ENCODE measurements at regions of chr2 and their contacts with region 1.

Region 1: GRCh38 chr2:62195421-62196277 is at the start of gene B3GNT2:
- DNase-seq: peak; percentile 72 to 94 (median 82)
- ATAC-seq: peak; percentile 76
- H3K4me3 ChIP-seq: peak within 1 kb of the TSS; percentile 98
- H3K4me3 Mint-ChIP-seq: peak within 1 kb of the TSS; percentile 95
- H3K27ac ChIP-seq: peak within 1 kb of the TSS; percentile 75 to 88
- H3K27ac Mint-ChIP-seq: peak within 1 kb of the TSS; percentile 78
- H3K4me1 ChIP-seq: peaks cover 32% of the 10 kb centered on the region
- H3K4me1 Mint-ChIP-seq: peaks cover 28% of the 10 kb centered on the region
- H3K27me3 ChIP-seq: no peaks in the 10 kb centered on the region
- H3K27me3 Mint-ChIP-seq: no peaks in the 10 kb centered on the region
- CTCF ChIP-seq: no peak
- total RNA-seq, gene B3GNT2: 47.7 TPM

Region 2: DNA sequence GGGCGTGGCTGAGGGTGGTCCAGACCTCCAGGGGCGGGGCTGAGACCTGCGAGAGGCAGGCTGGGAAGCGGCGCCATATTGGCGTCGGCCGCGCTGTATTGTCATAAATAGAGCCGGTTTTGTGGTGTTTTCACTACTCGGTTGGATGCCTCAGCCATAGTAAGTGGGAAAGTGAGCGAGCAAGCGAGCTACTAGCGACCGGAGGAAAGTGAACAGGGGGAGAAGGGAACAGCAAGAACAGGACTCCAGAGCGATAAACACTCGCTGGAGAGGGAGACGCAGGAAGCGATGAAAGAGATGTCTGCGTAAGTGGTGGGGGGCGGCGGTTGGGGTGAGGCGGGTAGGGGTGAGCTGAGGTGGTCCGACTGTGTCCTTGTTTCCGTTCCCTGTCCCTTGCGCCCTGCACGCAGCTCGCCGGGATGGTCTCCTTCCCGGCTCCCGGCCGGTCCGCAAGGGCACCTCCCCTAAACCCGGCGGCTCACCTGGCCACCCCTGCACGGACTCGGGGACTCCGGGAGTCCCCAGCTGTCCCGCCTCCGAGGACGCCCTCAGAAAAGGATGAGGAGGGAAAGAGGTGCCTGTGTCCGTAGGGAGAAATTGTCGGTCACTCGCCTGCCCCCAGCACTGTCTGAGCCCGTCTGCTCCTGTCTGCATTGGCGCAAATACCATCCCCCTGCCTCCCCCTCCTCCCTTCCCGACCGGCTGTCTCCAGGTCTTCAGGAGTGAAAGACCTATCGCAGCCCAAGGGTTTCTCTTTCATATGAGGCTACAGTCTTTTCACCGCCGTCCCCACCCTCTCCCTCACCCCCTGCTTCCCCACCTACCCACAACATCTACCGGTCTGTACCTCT is 1439.2 kb before region 1 on chr2 and contains the start of gene PAPOLG:
- CTCF ChIA-PET with region 1: no interaction called
- POLR2A ChIA-PET with region 1: no interaction called
- intact Hi-C with region 1: loop called in 1 of 2 experiments (anchors 10 kb)
- DNase-seq: peak; percentile 93 to 99 (median 96)
- ATAC-seq: peak; percentile 98
- H3K4me3 ChIP-seq: peak within 1 kb of the TSS; percentile 84
- H3K4me3 Mint-ChIP-seq: peak within 1 kb of the TSS; percentile 98
- H3K27ac ChIP-seq: peak within 1 kb of the TSS; percentile 80 to 91
- H3K27ac Mint-ChIP-seq: peak within 1 kb of the TSS; percentile 86
- H3K4me1 ChIP-seq: peaks cover 24% of the 10 kb centered on the region
- H3K4me1 Mint-ChIP-seq: peaks cover 50% of the 10 kb centered on the region
- H3K27me3 ChIP-seq: no peaks in the 10 kb centered on the region
- H3K27me3 Mint-ChIP-seq: no peaks in the 10 kb centered on the region
- CTCF ChIP-seq: no peak
- total RNA-seq, gene PAPOLG: 18.2 to 19.9 TPM

Region 3: DNA sequence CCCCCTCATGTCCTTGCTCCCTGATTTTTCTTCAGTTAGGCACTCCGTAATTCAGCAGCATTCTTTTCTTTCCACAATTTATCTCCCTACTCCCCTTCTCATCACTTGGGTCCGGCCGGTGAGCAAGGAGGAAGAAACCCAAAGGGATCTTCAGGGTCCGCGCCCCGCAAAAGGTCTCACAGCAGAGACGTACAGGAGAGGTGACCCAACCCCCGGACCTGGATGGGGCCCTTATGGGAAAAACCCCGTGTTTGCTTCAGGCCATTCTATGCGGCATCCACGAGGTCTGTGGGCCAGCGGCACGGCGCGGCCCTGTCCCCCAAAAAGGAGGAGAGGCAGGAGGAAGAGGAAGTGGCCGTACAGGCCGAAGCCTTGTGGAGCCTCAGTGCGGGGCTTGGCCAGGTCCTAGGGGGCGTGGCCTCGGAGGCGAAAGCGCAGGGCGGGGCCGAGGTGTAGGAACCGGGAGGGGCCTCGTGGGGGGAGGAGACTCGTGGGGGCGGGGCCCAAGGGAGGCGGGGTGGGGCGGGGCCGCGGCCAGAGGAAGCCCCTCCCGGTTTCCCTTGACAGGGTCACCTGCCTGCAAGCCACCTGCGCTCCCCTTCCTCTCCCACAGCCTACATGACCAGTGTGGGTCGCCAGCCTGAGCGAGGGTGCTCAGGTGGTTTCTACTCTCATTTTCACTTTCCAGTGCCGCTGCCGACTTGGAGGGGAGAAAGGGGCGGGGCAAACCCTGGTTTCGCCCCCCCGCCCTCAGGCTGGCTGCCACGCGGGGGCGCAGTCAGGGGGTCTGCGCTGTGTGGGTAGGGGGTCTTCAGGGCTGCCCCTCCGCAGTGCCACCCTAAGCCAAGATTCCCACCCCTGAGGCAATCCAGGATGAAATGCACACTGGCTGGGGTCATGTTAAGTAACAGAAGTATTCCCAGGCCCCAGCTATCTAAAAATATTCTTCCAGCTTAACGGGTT is 501.1 kb before region 1 on chr2:
- CTCF ChIA-PET with region 1: no interaction called
- POLR2A ChIA-PET with region 1: no interaction called
- intact Hi-C with region 1: loop called in 1 of 2 experiments (anchors 5 kb)
- DNase-seq: peak; percentile 65 to 90 (median 80)
- ATAC-seq: peak; percentile 95
- H3K4me3 ChIP-seq: peak overlapping the region; percentile 83
- H3K4me3 Mint-ChIP-seq: peak overlapping the region; percentile 89
- H3K27ac ChIP-seq: peak overlapping the region; percentile 29 to 59
- H3K27ac Mint-ChIP-seq: peak overlapping the region; percentile 85
- H3K4me1 ChIP-seq: peaks cover 11% of the 10 kb centered on the region
- H3K4me1 Mint-ChIP-seq: peaks cover 9% of the 10 kb centered on the region
- H3K27me3 ChIP-seq: no peaks in the 10 kb centered on the region
- H3K27me3 Mint-ChIP-seq: no peaks in the 10 kb centered on the region
- CTCF ChIP-seq: peak; percentile 31

Region 4: GRCh38 chr2:61888267-61889055 is 307.2 kb before region 1 on chr2 and contains the start of gene CCT4:
- CTCF ChIA-PET with region 1: no interaction called
- POLR2A ChIA-PET with region 1: no interaction called
- intact Hi-C with region 1: loop called in 1 of 2 experiments (anchors 5 kb)
- DNase-seq: peak; percentile 83 to 96 (median 88)
- ATAC-seq: peak; percentile 79
- H3K4me3 ChIP-seq: peak within 1 kb of the TSS; percentile 79
- H3K4me3 Mint-ChIP-seq: peak within 1 kb of the TSS; percentile 100
- H3K27ac ChIP-seq: peak within 1 kb of the TSS; percentile 90 to 98
- H3K27ac Mint-ChIP-seq: peak within 1 kb of the TSS; percentile 100
- H3K4me1 ChIP-seq: peaks cover 19% of the 10 kb centered on the region
- H3K4me1 Mint-ChIP-seq: peaks cover 38% of the 10 kb centered on the region
- H3K27me3 ChIP-seq: no peaks in the 10 kb centered on the region
- H3K27me3 Mint-ChIP-seq: no peaks in the 10 kb centered on the region
- CTCF ChIP-seq: no peak
- total RNA-seq, gene CCT4: 100 to 114 TPM

Region 5: GRCh38 chr2:62221141-62221540 is 25.5 kb after region 1 on chr2:
- CTCF ChIA-PET with region 1: no interaction called
- POLR2A ChIA-PET with region 1: no interaction called
- intact Hi-C with region 1: loop called in 1 of 2 experiments (anchors 1 kb)
- DNase-seq: no peak
- ATAC-seq: no peak
- H3K4me3 ChIP-seq: no peak overlapping the region
- H3K4me3 Mint-ChIP-seq: no peak overlapping the region
- H3K27ac ChIP-seq: no peak overlapping the region
- H3K27ac Mint-ChIP-seq: peak overlapping the region; percentile 84
- H3K4me1 ChIP-seq: peaks cover 40% of the 10 kb centered on the region
- H3K4me1 Mint-ChIP-seq: peaks cover 78% of the 10 kb centered on the region
- H3K27me3 ChIP-seq: no peaks in the 10 kb centered on the region
- H3K27me3 Mint-ChIP-seq: no peaks in the 10 kb centered on the region
- CTCF ChIP-seq: no peak

Region 6: DNA sequence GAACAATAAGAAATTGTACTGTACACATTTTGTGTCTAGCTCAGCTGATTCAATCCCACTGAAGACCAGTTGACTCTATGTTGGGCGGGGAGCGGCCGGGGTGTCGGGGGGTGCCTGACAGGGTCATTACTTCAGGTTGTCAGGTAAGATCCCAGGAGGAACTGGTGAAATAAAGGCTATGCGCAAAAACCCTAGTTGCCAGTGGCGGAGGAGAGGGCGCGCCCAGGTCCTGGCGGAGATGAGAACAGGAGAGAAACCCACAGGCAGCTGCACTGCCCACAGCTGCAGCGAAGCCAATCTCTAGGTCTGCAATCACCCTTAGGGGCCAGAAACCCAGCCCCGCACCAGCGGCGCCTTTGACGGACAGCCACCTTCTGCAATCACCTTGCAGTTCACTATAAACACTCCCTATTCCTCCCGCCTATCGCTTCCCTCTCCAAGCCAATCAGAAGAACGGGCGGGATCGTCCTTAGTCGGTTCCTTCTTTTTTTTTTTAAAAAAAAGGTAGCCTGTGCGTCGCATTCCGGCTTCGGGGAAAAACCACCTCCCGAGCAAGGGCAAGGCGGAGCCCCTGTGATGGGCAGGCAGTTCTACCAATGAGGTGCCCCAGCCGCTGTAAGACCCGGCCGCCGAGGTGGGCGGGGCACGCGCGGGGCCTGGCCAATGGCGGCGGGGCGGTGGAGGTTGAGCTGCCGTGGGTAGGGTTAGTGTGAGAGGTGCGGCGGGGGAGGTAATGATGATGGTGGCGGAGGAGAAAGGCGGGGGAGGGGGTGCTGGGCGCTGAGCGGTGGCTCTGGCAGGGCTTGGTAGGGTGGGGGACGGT is 509.6 kb after region 1 on chr2 and contains the start of gene EHBP1:
- CTCF ChIA-PET with region 1: no interaction called
- POLR2A ChIA-PET with region 1: no interaction called
- intact Hi-C with region 1: loop called in 1 of 2 experiments (anchors 2 kb)
- DNase-seq: peak; percentile 93 to 99 (median 97)
- ATAC-seq: peak; percentile 96
- H3K4me3 ChIP-seq: peak within 1 kb of the TSS; percentile 80
- H3K4me3 Mint-ChIP-seq: peak within 1 kb of the TSS; percentile 91
- H3K27ac ChIP-seq: peak within 1 kb of the TSS in 1 of 2 donors; percentile 24
- H3K27ac Mint-ChIP-seq: peak within 1 kb of the TSS; percentile 88
- H3K4me1 ChIP-seq: peaks cover 21% of the 10 kb centered on the region
- H3K4me1 Mint-ChIP-seq: peaks cover 36% of the 10 kb centered on the region
- H3K27me3 ChIP-seq: no peaks in the 10 kb centered on the region
- H3K27me3 Mint-ChIP-seq: no peaks in the 10 kb centered on the region
- CTCF ChIP-seq: no peak
- total RNA-seq, gene EHBP1: 21.4 to 22.3 TPM

Measured in CD4-positive, alpha-beta T cell (primary cell).